Tibial artery (tissue), 4 donors: ENCODE measurements at regions of chr13 and their contacts with region 1.

Region 1: GRCh38 chr13:30802953-30803478 is 67.7 kb downstream of the ALOX5AP start:
- DNase-seq: peak; percentile 85 to 91
- H3K4me3 ChIP-seq: peak overlapping the region; percentile 41 to 47
- H3K27ac ChIP-seq: peak overlapping the region; percentile 41 to 65
- H3K4me1 ChIP-seq: peaks cover 0 to 34% (median 15%) of the 10 kb centered on the region in 4 donors
- H3K27me3 ChIP-seq: no peaks in the 10 kb centered on the region
- CTCF ChIP-seq: peak; percentile 93 to 96

Region 2: DNA sequence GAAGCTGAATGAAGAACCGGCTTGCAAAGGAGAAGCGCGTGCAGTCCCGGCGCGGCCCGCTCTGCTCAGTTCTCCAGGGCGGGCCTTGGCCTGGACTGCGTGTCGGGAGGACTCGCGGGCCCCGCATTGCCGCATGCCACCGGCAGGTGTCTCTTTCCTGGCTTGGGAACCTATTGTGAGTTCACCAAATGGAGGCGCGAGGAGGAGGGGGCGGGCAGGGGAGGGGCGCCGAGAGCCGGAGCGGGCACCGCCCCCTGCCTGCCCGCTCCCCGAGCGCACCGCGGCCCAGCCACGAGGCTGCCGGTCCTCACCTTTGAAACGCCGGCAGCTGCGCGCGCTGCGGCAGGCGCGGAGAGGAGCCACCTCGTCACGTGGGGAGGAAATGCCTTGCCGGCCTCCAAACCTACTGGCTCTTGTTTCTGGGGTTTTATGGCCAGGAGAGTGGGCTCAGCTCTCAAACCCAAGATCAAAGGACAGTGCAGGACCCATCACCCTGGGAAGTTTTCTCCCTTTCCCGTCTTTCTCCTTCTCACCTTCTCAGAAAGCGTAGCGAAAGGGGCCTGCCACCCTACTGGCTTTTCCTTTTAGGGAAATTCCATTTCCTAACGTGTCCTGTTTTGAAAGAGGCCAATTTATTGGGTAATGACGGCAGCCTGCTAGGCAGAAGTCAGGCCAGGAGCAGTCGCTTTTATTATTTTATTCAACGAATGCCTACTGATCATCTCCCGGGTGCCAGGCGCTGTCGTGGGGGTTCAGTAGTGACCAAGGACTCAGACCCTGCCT is 394.5 kb before region 1 on chr13:
- intact Hi-C with region 1: loop called (anchors 5 kb)
- DNase-seq: peak; percentile 93 to 98
- H3K4me3 ChIP-seq: peak overlapping the region; percentile 45 to 53
- H3K27ac ChIP-seq: peak overlapping the region; percentile 79 to 95
- H3K4me1 ChIP-seq: peaks cover 0 to 33% (median 16%) of the 10 kb centered on the region in 4 donors
- H3K27me3 ChIP-seq: no peaks in the 10 kb centered on the region
- CTCF ChIP-seq: peak; percentile 73 to 91

Region 3: DNA sequence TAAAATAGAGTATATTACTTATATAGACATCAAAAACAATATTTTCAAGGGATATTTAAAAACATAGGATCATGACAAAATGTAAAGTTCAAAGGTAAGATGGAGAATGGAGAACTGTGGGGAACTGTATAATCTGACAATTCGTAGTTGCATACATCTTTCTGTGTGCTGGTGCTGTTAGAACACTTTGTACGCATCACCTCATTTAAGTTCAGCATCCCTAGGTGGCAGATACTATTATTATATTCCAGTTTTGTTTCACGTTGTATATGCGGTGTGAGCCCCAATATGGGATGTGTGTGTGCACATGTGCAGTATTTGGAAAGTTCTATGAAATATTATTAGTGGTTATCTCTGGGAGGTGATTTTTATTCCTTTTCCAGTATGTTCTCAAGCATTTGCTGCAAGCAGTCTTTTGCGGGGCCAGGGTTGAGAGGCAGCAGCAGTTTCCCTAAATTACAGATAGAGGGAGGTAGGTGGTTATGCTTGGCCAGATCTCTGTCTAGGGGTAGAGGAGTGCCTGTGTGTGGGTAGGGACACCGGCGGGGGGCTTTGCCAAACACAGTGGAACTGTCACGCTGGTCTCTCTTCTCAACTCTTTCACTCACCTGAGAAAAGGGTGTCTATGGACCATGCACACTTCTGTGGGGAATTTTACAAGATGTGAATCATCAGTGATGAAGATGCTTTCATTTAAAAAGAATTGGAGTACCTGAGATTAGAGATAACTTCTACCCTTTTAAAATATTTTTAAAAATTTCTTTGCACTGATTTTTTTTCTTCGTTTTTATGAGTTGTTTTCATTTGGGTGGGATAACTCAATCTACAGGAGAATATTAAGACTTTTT is 123.3 kb before region 1 on chr13:
- intact Hi-C with region 1: loop called (anchors 5 kb)
- DNase-seq: no peak
- H3K4me3 ChIP-seq: no peak overlapping the region
- H3K27ac ChIP-seq: no peak overlapping the region
- H3K4me1 ChIP-seq: no peaks in the 10 kb centered on the region
- H3K27me3 ChIP-seq: no peaks in the 10 kb centered on the region
- CTCF ChIP-seq: peak; percentile 53 to 66

Region 4: DNA sequence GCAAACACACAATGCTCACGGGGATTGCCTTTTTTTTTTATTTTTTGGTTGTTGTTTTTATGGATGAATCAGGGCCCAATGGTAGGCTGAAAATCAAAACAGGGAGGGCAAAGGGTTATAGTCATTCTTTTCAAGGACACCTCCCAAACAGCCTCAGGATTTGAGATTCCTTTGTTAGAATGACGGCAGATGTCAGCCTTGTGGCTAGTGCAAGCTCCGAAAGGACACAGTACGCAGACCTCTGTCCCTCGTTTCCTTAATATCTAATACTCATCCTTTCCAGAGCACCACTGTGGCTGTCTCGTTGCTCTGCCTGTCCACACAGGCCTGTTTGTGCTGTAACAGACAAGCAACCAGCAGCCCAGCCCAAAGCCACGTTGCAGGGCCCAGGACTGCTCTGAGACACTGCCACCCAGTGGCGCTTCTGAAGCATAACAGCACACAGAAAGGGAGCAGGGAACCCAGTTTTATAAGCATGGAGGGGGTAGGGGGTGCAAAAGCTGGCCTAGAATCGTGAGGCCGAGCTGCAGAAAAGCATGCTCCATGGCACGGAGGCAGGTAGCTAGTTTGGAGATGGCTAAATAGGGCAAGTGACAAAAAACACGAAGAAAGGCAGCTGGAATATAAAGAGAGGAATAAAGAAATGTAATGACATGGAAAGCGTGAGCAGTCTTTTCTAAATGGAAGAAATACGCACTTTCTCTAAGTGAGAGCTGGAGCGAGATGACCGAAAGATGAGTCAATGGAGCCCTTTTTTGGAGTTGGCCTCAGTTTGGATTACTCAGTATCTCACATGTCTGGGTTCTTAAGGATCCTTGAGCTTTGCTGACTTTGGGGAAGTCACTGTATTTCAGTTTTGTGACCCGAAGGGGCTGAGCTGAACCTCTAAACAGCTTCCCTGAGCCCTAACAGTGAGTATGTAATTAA is 62.4 kb after region 1 on chr13:
- intact Hi-C with region 1: loop called (anchors 5 kb)
- DNase-seq: peak; percentile 85 to 90
- H3K4me3 ChIP-seq: no peak overlapping the region
- H3K27ac ChIP-seq: peak overlapping the region; percentile 87 to 93
- H3K4me1 ChIP-seq: peaks cover 6 to 63% (median 57%) of the 10 kb centered on the region in 4 donors
- H3K27me3 ChIP-seq: no peaks in the 10 kb centered on the region
- CTCF ChIP-seq: peak; percentile 92 to 94

Region 5: GRCh38 chr13:31044377-31045285 is 241.6 kb after region 1 on chr13:
- intact Hi-C with region 1: loop called (anchors 10 kb)
- DNase-seq: peak; percentile 71 to 86
- H3K4me3 ChIP-seq: no peak overlapping the region
- H3K27ac ChIP-seq: peak overlapping the region in 1 of 2 donors; percentile 47
- H3K4me1 ChIP-seq: peaks cover 0 to 21% (median 14%) of the 10 kb centered on the region in 4 donors
- H3K27me3 ChIP-seq: peaks cover 0 to 2% of the 10 kb centered on the region in 2 donors
- CTCF ChIP-seq: peak; percentile 93 to 97